Cardiac septum (tissue), 1 donor: ENCODE measurements at regions of chr6 and their contacts with region 1.

Region 1: DNA sequence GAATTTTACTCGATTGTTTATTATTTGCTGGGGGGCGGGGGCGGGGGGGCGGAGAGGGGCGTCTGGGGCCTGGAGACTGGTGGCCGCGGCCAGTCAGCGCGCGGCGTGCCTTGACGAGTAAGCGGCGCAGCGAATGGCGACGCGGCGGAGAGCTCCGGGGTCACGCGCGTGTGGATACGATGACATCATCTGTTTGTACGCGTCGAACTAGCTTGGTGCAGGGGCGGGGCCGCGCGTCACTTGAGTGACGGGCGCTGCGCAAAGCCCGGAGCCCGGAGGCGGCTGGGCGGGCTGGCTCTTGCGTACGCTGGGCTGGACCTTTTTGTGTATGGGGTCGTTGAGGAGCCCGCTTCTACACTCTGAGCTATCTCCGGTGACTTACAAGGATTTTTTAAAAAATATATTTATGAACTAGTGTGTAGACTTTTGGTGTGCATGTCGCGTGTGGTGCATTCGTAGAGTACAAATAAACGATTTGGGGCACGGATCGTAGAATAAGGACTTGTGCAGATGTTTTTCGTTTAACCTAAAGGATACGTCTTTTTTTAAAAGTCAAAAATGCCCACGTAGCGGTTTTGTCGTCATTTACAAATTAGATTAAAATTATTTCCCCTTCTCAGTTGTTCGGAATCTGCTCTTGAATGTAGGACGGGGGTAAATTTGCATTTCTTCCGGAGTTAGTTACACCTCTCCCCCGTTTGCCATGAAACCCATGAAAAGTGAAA is 2.2 kb upstream of the FOXO3 start:
- DNase-seq: peak; percentile 99

Region 2: GRCh38 chr6:108782179-108783041 is 223.9 kb after region 1 on chr6:
- intact Hi-C with region 1: loop called (anchors 2 kb)
- DNase-seq: peak; percentile 92

Region 3: DNA sequence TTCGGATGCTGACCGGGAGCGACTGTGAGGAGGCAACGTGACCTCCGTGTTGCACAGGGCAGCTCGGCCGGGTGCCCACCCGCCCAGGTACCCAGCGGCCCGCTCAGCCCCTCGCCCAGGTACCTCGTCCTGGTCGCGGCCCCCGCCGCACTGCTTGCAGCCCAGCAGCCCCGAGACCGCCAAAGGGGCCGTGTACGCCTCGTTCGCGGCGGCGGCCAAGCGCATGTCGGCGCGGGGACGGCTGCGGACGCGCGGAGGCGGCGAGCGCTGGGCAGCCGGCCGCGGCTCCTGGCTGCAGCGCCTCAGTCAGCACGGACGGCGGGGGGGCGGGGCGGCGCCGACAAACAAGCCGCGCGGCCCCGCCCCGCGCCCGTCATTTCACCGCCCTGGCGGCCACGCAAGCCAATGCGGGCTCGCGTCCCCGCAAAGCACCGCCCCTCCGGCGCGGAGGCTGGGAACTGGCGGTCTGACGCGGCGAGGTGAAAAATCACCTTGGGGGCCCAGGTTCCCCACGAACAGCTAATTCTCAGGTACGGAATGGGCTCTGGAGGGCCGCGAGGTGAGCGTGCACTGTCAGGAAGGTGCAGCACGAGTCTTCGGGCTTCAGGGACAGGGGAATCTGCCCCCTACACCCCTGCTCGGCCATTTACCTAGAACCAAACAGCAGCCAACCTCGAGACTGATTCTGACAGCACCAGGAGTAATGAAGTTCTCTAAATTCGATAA is 450.9 kb after region 1 on chr6:
- intact Hi-C with region 1: loop called (anchors 5 kb)
- DNase-seq: peak; percentile 98

Region 4: DNA sequence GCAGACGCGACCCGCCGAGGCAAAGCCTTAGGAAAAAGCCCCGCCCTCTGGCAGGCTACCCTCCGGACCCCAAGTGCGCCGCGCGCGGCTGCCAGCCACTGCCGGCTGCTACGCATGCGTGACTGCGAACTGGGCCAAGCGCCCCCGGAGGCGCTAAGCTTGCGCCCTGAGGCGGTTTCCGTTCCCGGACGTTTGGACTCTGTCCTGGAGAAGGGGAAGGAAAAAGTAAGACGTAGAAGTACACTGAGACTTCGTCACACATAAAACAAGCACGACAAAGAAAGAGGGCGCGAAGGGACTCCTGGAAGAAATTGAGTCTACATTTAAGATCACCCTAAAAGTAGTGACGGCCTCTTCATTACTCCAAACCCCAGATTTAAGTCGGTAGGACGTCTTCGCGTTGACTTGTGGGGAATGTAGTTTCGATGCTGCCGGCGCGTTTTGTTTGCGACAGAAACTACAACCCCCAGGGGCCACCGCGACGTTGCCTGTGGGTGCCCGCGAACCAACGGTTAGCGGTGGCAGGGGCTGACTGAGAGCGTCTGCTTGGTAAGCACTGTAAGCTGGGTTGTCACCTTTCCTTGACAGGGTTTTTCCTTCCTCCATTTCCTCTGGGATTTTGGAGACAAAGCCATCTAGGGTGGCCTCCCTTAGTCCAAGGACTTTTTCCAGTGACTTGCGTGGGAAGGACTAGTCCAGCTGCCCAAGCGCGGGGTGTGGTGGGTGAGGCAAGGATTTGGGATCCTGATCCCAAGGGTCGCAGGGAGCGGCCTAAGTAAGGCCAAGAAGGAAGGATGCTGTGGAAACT is 536.7 kb after region 1 on chr6 and contains the start of gene CEP57L1:
- intact Hi-C with region 1: loop called (anchors 1 kb)
- DNase-seq: peak; percentile 97
- total RNA-seq, gene CEP57L1: 7.9 TPM